Lower leg skin (tissue), 4 donors: ENCODE measurements at regions of chr22 and their contacts with region 1.

Region 1: GRCh38 chr22:37566903-37567820 is 6.9 kb downstream of the CDC42EP1 start:
- DNase-seq: peak in 1 of 2 donors; percentile 96
- H3K4me3 ChIP-seq: no peak overlapping the region
- CTCF ChIP-seq: peak in 2 of 3 donors; percentile 40 to 72
- POLR2A ChIP-seq: no peak

Region 2: DNA sequence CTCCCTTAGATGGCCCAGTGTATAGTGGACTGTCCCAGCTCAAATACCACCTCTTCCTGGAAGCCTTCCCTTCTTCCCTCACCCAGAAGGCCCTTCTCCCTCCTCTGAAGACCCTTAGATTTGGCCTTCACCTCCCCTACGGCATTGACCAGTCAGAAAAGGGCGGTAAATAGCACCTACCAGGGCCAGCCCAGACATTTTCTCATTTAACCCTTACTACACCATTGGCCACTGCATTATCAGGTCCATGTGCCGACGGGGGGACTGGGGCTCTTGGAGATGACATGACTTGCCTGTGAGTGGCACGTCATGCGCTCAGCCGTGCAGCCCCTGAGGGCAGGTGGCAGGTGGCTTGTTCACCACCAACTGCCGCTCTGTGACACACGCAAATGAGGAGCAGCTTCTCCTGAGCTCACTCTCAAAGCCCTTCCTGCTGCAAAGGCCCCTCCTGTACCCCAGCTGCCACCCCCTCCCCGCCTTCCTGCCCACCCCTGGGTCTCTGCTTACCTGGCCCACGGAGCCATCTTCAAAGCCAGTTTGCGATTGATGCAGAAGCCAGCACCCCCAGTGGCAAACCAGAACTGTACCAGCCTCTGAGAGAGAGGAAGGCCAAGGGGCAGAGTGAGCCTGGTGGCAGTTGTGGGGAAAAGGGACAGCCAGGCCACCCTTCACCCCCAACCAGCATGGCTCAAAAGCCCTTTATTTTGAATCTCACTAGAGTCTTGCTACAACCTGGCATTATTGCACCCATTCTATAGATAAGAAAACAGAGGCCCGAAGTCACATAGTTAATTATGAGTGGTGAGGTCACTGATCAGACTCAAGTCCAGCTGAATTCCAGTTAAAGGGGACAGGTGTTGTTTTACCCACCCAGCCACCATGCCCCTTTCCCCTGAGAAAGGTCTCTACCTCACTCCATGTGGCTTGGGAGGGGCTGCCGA is 90.5 kb before region 1 on chr22:
- intact Hi-C with region 1: no loop called
- DNase-seq: no peak
- H3K4me3 ChIP-seq: no peak overlapping the region
- CTCF ChIP-seq: no peak
- POLR2A ChIP-seq: no peak

Region 3: GRCh38 chr22:38181453-38182247 is 614.5 kb after region 1 on chr22 and contains the start of gene PLA2G6:
- intact Hi-C with region 1: loop called (anchors 10 kb)
- DNase-seq: peak; percentile 99 to 100
- H3K4me3 ChIP-seq: no peak within 1 kb of the TSS
- CTCF ChIP-seq: no peak
- POLR2A ChIP-seq: no peak
- total RNA-seq, gene PLA2G6: 46.0 to 88.4 (median 64.8) TPM